ENCODE measurements at regions of chr7 and their contacts with region 1.

Region 1: DNA sequence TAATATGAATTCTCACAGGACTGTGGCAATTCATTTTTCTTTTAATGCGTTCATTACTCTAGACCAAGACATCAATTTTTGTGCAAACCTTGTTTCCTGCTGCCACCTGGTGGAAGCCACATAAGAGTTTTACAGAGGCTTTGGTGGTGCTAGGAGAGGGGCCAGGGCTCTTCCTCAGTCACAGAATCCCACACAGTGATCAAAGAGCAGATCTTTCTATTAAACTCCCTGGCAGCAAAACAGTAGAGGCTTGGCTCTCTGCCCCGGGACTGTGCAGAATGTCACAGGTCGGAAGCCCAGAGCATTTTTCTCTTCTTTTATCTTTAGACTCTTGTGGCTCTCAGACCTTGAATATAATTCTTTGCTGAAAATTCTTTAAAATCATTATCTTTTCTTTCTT is 506.4 kb upstream of the C7orf33 start:
- DNase-seq: no peak
- ATAC-seq: peak; percentile 81
- H3K4me3 ChIP-seq: no peak overlapping the region
- H3K27ac ChIP-seq: no peak overlapping the region
- H3K4me1 ChIP-seq: no peaks in the 10 kb centered on the region
- H3K27me3 ChIP-seq: no peaks in the 10 kb centered on the region; a peak in 1 of 4 replicates
- CTCF ChIP-seq: peak; percentile 56 to 68 (median 57); a peak in 5 of 6 replicates
- EP300 ChIP-seq: no peak
- POLR2A ChIP-seq: no peak
- RAD21 ChIP-seq: peak; percentile 96

Region 2: GRCh38 chr7:147245292-147245691 is 838.8 kb before region 1 on chr7:
- CTCF ChIA-PET with region 1: interaction called, 3 read pairs
- POLR2A ChIA-PET with region 1: no interaction called
- RAD21 ChIA-PET with region 1: no interaction called
- SMC1A ChIA-PET with region 1: no interaction called
- in situ Hi-C with region 1: loop called (anchors 10 kb)
- intact Hi-C with region 1: loop called (anchors 1 kb)
- DNase-seq: no peak
- ATAC-seq: peak; percentile 81
- H3K4me3 ChIP-seq: no peak overlapping the region
- H3K27ac ChIP-seq: no peak overlapping the region
- H3K4me1 ChIP-seq: no peaks in the 10 kb centered on the region
- H3K27me3 ChIP-seq: no peaks in the 10 kb centered on the region
- CTCF ChIP-seq: peak; percentile 60 to 80 (median 64); a peak in 5 of 6 replicates
- EP300 ChIP-seq: no peak
- POLR2A ChIP-seq: no peak
- RAD21 ChIP-seq: peak; percentile 62

Region 3: DNA sequence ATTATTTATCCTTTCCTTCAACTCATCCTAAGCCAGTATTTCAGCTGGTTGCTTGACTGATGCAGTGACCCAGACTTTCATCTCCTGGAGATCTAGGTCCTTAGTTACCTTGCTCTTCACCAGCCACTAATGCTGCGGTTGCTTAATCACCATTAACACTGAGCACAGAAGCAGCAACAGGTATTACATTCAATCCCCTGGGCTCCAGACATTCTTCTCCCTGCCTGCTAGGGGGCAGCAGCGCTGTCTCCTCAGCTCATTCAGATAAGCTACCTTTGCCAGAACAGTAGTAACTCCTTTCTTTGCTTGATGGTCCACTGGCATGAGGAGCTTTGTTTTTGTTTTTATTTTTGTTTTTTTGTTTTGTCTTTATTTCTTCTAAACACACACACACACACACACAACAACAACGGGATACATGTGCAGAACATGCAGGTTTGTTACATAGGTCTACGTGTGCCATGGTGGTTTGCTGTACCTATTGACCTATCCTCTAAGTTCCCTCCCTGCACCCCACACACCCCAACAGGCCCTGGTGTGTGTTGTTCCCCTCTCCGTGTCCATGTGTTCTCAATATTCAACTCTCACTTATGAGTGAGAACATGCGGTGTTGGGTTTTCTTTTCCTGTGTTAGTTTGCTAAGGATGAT is 536.8 kb before region 1 on chr7:
- CTCF ChIA-PET with region 1: interaction called, 6 read pairs
- POLR2A ChIA-PET with region 1: no interaction called
- RAD21 ChIA-PET with region 1: no interaction called
- SMC1A ChIA-PET with region 1: interaction called, 3 read pairs
- in situ Hi-C with region 1: no loop called
- intact Hi-C with region 1: loop called (anchors 1 kb)
- DNase-seq: no peak
- ATAC-seq: peak; percentile 47; the same call in 1 of the 3 replicates
- H3K4me3 ChIP-seq: no peak overlapping the region
- H3K27ac ChIP-seq: no peak overlapping the region
- H3K4me1 ChIP-seq: no peaks in the 10 kb centered on the region
- H3K27me3 ChIP-seq: no peaks in the 10 kb centered on the region
- CTCF ChIP-seq: peak; percentile 33 to 42 (median 34); a peak in 5 of 6 replicates
- EP300 ChIP-seq: no peak
- POLR2A ChIP-seq: no peak
- RAD21 ChIP-seq: peak; percentile 54

Region 4: GRCh38 chr7:147885869-147886268 is 198.3 kb before region 1 on chr7:
- CTCF ChIA-PET with region 1: no interaction called
- POLR2A ChIA-PET with region 1: no interaction called
- RAD21 ChIA-PET with region 1: no interaction called
- SMC1A ChIA-PET with region 1: no interaction called
- in situ Hi-C with region 1: no loop called
- intact Hi-C with region 1: loop called (anchors 5 kb)
- DNase-seq: no peak
- ATAC-seq: no peak
- H3K4me3 ChIP-seq: no peak overlapping the region
- H3K27ac ChIP-seq: no peak overlapping the region
- H3K4me1 ChIP-seq: no peaks in the 10 kb centered on the region
- H3K27me3 ChIP-seq: no peaks in the 10 kb centered on the region
- CTCF ChIP-seq: no peak
- EP300 ChIP-seq: no peak
- POLR2A ChIP-seq: no peak
- RAD21 ChIP-seq: no peak

Region 5: DNA sequence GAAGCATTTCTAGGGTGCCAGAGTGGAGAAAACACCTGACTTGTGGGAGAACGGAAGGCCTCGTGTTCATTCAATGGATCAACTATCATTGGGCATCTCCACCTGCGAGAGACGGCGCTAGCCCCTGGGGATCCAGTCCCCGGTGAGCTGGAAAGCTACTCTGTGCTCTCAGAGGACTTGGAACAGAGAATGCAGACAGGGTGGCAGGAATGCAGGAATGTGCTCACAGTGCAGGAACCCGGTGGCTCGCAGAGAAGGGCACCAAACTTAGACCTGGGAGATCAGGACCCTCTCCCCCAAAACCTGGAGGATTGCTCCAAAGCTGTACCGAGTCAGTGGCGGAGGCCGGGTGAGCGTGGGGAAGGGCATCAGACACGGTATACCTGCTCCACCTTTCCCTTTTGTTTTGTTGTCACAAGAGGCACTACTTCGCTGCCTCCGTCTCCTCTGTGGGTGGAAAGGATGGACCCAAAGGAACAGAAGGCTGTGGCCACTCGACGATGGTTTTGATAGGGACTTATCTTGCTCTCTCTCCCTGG is 62.6 kb before region 1 on chr7:
- CTCF ChIA-PET with region 1: no interaction called
- POLR2A ChIA-PET with region 1: no interaction called
- RAD21 ChIA-PET with region 1: no interaction called
- SMC1A ChIA-PET with region 1: no interaction called
- in situ Hi-C with region 1: no loop called
- intact Hi-C with region 1: no loop called
- DNase-seq: no peak
- ATAC-seq: no peak
- H3K4me3 ChIP-seq: no peak overlapping the region
- H3K27ac ChIP-seq: no peak overlapping the region
- H3K4me1 ChIP-seq: no peaks in the 10 kb centered on the region
- H3K27me3 ChIP-seq: no peaks in the 10 kb centered on the region
- CTCF ChIP-seq: no peak
- EP300 ChIP-seq: no peak
- POLR2A ChIP-seq: no peak
- RAD21 ChIP-seq: no peak

Measured in GM12878 (cell line).